ENCODE measurements at regions of chr6 and their contacts with region 1.

Region 1: DNA sequence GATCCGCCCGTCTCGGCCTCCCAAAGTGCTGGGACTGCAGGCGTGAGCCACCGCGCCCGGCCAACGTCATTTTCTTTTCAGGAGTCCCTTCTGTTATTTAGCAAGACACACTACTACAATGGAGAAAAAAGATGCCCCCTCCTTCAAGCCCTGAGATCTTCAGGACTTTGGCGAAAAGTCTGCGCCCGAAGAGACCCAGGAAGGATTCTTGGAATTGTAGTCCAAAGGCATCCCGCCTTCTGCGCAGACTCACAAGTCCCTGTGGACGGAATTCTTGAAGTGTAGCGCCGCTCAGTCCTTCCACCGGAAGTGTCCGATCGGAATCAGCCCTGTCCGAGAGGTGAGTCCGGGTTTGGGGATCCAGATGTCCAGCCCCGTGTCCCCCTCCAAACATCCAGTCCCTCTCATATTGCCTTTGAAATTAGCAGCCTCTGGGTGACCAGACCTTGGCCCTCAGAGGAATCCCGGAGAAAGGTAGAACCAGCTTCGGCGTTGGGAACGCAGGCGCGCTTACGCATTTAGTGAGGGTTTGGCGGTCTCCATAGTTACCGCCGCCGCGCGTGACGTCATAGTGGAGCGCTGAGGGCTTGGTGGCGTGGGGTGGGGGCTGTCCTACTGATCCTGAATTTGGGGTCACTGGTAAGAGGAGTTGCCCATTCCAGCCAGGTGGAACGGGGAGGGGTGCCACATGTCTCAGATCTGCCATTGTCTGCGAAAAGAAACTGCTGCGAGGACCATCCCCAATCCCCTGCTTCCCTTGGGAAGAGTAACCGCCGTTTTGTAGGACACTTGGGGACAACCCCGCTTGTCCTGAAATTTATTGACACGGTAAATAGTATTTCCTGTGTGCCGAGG is 490 bp downstream of the ZNF165 start:
- DNase-seq: peak; percentile 89 to 94 (median 93)
- ATAC-seq: peak; percentile 85
- H3K4me3 ChIP-seq: peak overlapping the region; percentile 99
- H3K4me3 Mint-ChIP-seq: peak overlapping the region; percentile 87 to 99 (median 98)
- H3K27ac ChIP-seq: peak overlapping the region; percentile 97
- H3K27ac Mint-ChIP-seq: peak overlapping the region; percentile 84 to 99 (median 98)
- H3K4me1 ChIP-seq: peaks cover 6 to 7% of the 10 kb centered on the region in 2 donors
- H3K4me1 Mint-ChIP-seq: peaks cover 12 to 27% (median 16%) of the 10 kb centered on the region in 7 donors
- H3K27me3 ChIP-seq: no peaks in the 10 kb centered on the region
- H3K27me3 Mint-ChIP-seq: peaks cover 0 to 3% (median 0%) of the 10 kb centered on the region in 5 donors

Region 2: DNA sequence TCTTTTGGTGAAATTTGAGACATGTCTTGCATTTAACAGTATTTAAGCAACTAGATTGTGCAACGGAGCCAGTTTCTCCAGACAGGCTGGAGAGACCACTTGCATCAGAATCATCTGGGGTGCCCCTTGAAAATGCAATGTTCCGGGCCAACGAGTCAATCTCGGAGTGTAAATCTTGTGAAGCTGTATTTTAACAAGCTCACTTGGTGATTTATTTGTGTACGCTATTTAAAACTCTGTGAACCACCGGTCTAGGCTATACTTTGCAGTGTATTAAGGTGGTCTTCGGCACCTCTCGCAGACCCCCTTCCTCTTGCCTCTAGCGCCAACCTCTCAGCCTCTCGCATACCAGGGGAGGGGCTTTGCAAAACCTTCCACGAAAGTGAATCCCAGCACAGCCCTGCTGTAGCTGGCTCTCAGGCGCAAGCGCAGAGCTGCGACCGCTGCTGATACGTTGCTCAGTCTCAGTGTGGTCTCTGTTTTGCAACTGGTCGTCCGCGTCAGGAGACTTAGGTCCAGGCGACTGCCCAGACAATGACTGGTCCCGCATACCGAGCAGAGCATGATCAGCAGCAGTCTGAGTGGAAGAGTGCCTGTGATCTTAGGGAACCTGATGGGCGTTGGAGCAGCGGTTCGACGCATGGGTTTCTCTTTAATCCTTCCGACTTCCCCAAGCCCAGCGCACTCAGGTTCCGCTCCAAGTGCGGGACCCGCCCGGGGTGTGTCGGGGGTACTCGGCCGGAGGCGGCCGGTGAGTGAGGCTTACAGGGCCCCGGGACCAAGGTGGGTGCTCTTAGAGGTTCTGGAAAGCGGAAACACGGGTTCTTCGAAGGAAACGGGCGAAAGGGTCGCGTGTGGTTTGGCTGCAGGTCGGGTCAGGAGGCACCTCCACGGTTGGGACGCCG is 692.3 kb before region 1 on chr6 and contains the start of gene ZNF391:
- CTCF ChIA-PET with region 1: no interaction called
- POLR2A ChIA-PET with region 1: no interaction called
- intact Hi-C with region 1: loop called in 1 of 2 experiments (anchors 2 kb)
- DNase-seq: peak; percentile 46 to 77 (median 67)
- ATAC-seq: peak; percentile 90
- H3K4me3 ChIP-seq: peak within 1 kb of the TSS; percentile 92
- H3K4me3 Mint-ChIP-seq: peak within 1 kb of the TSS; percentile 95 to 99 (median 98)
- H3K27ac ChIP-seq: peak within 1 kb of the TSS; percentile 78
- H3K27ac Mint-ChIP-seq: peak within 1 kb of the TSS; percentile 85 to 96 (median 93)
- H3K4me1 ChIP-seq: peaks cover 4 to 9% of the 10 kb centered on the region in 2 donors
- H3K4me1 Mint-ChIP-seq: peaks cover 9 to 31% (median 18%) of the 10 kb centered on the region in 7 donors
- H3K27me3 ChIP-seq: no peaks in the 10 kb centered on the region
- H3K27me3 Mint-ChIP-seq: peaks cover 0 to 9% (median 2%) of the 10 kb centered on the region in 5 donors
- total RNA-seq, gene ZNF391: 0.19 to 5.7 (median 3.3) TPM

Region 3: DNA sequence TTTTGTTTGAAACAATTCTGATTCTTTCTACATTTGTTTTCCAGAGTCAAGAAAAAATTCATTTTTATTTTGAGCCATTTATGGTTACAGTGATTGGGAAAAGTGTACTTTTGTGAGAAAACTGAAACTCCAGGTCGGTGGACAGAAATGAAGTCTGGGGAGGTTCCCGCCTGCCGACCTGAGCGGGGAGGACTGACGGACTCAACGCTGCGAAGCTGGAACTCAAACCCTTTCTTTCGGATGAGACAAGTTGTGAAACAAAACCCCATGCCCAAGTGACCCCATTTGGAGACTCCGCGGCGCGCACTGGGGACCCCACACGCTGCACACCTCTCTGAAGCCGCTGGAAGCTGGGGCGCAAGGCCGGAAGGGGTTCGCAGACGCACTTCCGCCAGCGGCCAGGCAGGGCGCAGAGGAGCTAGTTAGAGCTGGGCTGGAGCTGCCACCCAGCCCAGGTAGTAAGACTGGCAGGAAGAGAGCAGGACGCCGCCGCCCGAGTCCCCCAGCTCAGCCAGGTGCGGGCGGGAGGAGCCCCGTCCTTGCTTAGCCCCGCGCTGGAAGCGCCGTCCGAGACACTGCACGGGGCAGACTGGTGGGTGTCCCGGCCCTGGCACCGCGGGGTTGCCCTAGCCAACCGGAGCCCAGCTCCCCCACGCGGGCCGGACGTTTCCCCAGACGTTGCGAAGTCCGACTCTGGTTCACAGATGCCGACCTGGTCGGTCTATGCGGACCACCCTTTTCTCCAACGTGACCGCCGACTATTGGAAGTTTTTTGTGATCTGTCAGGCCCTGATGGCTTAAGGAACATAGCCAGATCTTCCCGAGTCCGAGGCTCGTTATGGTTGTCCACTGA is 23.8 kb after region 1 on chr6:
- CTCF ChIA-PET with region 1: no interaction called
- POLR2A ChIA-PET with region 1: interaction called, 4 read pairs
- intact Hi-C with region 1: loop called (anchors 1 kb)
- DNase-seq: peak; percentile 68 to 82 (median 79)
- ATAC-seq: peak; percentile 99
- H3K4me3 ChIP-seq: peak overlapping the region; percentile 79
- H3K4me3 Mint-ChIP-seq: peak overlapping the region; percentile 86 to 95 (median 92)
- H3K27ac ChIP-seq: peak overlapping the region; percentile 76
- H3K27ac Mint-ChIP-seq: peak overlapping the region; percentile 76 to 96 (median 94)
- H3K4me1 ChIP-seq: peaks cover 0 to 7% of the 10 kb centered on the region in 2 donors
- H3K4me1 Mint-ChIP-seq: peaks cover 6 to 19% (median 9%) of the 10 kb centered on the region in 7 donors
- H3K27me3 ChIP-seq: no peaks in the 10 kb centered on the region
- H3K27me3 Mint-ChIP-seq: peaks cover 0 to 26% (median 16%) of the 10 kb centered on the region in 5 donors

Region 4: DNA sequence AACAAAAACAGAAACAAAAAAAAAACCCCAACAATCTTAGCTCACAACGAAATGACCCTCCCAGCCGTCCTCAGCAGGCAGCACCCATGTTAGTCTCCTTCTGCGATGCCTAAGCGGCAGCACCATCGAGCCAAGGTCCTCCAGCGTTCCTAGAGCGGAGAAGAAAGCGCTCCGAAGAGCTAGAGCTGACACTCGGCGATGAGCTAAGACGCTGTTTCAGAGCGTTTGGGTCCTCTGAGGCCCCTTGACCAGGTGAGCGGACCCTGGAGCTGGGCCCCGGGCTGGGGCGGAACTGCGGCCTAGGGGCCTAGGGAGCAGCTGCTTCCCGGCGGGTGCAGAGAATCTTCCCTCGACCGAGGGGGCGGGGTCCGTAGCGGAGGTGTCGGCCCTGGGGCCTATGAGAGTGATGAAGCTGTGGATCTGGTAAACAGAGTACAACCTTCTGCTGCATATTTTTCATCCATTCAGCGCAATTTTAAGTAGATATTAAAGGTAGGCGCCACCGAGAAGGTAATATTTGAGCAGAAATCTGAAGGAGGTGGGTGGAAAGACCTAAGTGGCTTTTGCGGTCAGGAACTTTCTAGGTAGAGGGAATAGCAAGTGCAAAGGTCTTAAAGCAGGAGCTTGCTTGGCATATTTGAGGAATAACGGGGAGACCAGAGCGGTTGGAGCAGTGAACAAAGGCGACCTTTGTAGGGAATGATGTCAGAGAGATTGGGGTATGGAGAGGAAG is 186.3 kb after region 1 on chr6 and contains the start of gene ZSCAN26:
- CTCF ChIA-PET with region 1: no interaction called
- POLR2A ChIA-PET with region 1: no interaction called
- intact Hi-C with region 1: loop called in 1 of 2 experiments (anchors 1 kb)
- DNase-seq: peak; percentile 67 to 91 (median 87)
- ATAC-seq: peak; percentile 96
- H3K4me3 ChIP-seq: peak within 1 kb of the TSS; percentile 96
- H3K4me3 Mint-ChIP-seq: peak within 1 kb of the TSS in 1 of 10 donors; percentile 30
- H3K27ac ChIP-seq: peak within 1 kb of the TSS; percentile 91
- H3K27ac Mint-ChIP-seq: peak within 1 kb of the TSS in 1 of 9 donors; percentile 48
- H3K4me1 ChIP-seq: peaks cover 0 to 24% of the 10 kb centered on the region in 2 donors
- H3K4me1 Mint-ChIP-seq: peaks cover 6 to 37% (median 24%) of the 10 kb centered on the region in 7 donors
- H3K27me3 ChIP-seq: no peaks in the 10 kb centered on the region
- H3K27me3 Mint-ChIP-seq: peaks cover 0 to 7% (median 0%) of the 10 kb centered on the region in 5 donors
- total RNA-seq, gene ZSCAN26: 8.0 to 27.8 (median 12.5) TPM

Region 5: GRCh38 chr6:28399350-28400121 is 318.7 kb after region 1 on chr6 and contains the start of gene ZSCAN12:
- CTCF ChIA-PET with region 1: no interaction called
- POLR2A ChIA-PET with region 1: no interaction called
- intact Hi-C with region 1: loop called in 1 of 2 experiments (anchors 1 kb)
- DNase-seq: peak; percentile 73 to 87 (median 81)
- ATAC-seq: peak; percentile 97
- H3K4me3 ChIP-seq: peak within 1 kb of the TSS; percentile 88
- H3K4me3 Mint-ChIP-seq: peak within 1 kb of the TSS; percentile 84 to 96 (median 92)
- H3K27ac ChIP-seq: peak within 1 kb of the TSS; percentile 74
- H3K27ac Mint-ChIP-seq: peak within 1 kb of the TSS; percentile 77 to 96 (median 93)
- H3K4me1 ChIP-seq: peaks cover 8 to 30% of the 10 kb centered on the region in 2 donors
- H3K4me1 Mint-ChIP-seq: peaks cover 30 to 54% (median 47%) of the 10 kb centered on the region in 7 donors
- H3K27me3 ChIP-seq: no peaks in the 10 kb centered on the region
- H3K27me3 Mint-ChIP-seq: peaks cover 0 to 33% (median 22%) of the 10 kb centered on the region in 5 donors
- total RNA-seq, gene ZSCAN12: 2.9 to 10.3 (median 7.4) TPM

Region 6: DNA sequence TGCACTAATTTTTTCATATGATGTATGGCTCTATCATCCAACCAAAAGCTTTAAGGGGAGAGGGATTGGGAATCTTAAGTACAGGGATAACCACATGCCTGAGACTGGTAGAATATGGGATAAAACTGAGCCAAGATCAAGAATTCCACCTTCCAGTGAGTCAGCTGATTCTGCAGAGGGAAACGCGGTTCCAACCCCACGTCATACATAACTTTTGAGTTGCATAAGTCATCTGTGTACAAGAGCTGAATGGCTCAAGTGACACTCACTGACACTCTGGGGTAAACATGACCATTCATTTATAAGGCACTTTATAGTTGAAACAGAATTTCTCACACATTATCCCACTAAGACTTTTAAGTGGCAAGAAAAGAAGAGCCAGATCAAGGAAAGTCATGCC is 826.5 kb after region 1 on chr6:
- CTCF ChIA-PET with region 1: no interaction called
- POLR2A ChIA-PET with region 1: no interaction called
- intact Hi-C with region 1: no loop called
- DNase-seq: no peak
- ATAC-seq: no peak
- H3K4me3 ChIP-seq: no peak overlapping the region
- H3K4me3 Mint-ChIP-seq: no peak overlapping the region
- H3K27ac ChIP-seq: no peak overlapping the region
- H3K27ac Mint-ChIP-seq: peak overlapping the region in 2 of 9 donors; percentile 16 to 21
- H3K4me1 ChIP-seq: no peaks in the 10 kb centered on the region
- H3K4me1 Mint-ChIP-seq: peaks cover 0 to 12% (median 3%) of the 10 kb centered on the region in 7 donors
- H3K27me3 ChIP-seq: no peaks in the 10 kb centered on the region
- H3K27me3 Mint-ChIP-seq: no peaks in the 10 kb centered on the region

Region 7: DNA sequence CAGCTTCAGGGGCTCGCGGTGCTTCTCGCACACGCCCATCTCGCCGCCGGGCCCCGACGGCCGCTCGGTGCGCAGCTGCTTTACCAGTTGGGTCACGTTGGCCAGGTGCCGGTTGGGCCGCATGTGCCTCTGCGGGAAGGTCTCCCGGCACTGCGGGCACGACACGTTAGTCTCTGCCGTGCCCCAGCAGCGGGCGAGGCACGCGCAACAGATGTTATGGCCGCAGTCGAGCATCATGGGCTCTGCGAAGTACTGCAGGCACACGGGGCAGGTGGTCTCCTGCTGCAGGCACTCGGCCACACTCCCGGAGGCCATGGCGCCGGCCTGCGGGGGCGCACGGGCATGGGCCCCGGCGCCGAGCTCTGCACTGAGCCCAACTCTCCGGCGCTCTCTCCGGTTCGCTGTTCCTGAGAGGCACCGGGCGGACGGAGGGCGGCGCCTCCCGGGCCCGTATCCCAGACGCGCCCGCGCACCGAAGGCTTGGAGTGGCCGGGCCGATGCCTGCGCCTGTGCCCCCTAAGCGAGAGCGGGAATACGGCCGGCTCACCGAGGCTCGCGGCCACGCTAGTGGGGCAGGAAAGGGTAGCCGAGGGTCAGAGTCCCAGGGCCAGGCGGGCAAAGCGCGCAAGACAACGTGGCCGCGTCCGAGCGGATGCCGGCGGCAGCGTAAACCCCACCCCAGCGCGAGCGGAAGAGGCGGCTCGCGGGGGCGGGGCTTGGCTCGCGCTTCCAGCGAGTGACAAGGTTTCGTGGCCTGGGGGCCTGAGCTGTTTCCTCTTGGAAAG is 842.7 kb after region 1 on chr6 and contains the start of gene TRIM27:
- CTCF ChIA-PET with region 1: no interaction called
- POLR2A ChIA-PET with region 1: no interaction called
- intact Hi-C with region 1: loop called in 1 of 2 experiments (anchors 5 kb)
- DNase-seq: peak; percentile 67 to 87 (median 80)
- ATAC-seq: peak; percentile 89
- H3K4me3 ChIP-seq: peak within 1 kb of the TSS; percentile 87
- H3K4me3 Mint-ChIP-seq: peak within 1 kb of the TSS; percentile 87 to 99 (median 95)
- H3K27ac ChIP-seq: peak within 1 kb of the TSS; percentile 86
- H3K27ac Mint-ChIP-seq: peak within 1 kb of the TSS; percentile 86 to 96 (median 92)
- H3K4me1 ChIP-seq: peaks cover 20 to 34% of the 10 kb centered on the region in 2 donors
- H3K4me1 Mint-ChIP-seq: peaks cover 28 to 52% (median 41%) of the 10 kb centered on the region in 7 donors
- H3K27me3 ChIP-seq: no peaks in the 10 kb centered on the region
- H3K27me3 Mint-ChIP-seq: no peaks in the 10 kb centered on the region
- total RNA-seq, gene TRIM27: 22.9 to 93.9 (median 67.5) TPM